ENCODE measurements at regions of chr5 and their contacts with region 1.

Region 1: DNA sequence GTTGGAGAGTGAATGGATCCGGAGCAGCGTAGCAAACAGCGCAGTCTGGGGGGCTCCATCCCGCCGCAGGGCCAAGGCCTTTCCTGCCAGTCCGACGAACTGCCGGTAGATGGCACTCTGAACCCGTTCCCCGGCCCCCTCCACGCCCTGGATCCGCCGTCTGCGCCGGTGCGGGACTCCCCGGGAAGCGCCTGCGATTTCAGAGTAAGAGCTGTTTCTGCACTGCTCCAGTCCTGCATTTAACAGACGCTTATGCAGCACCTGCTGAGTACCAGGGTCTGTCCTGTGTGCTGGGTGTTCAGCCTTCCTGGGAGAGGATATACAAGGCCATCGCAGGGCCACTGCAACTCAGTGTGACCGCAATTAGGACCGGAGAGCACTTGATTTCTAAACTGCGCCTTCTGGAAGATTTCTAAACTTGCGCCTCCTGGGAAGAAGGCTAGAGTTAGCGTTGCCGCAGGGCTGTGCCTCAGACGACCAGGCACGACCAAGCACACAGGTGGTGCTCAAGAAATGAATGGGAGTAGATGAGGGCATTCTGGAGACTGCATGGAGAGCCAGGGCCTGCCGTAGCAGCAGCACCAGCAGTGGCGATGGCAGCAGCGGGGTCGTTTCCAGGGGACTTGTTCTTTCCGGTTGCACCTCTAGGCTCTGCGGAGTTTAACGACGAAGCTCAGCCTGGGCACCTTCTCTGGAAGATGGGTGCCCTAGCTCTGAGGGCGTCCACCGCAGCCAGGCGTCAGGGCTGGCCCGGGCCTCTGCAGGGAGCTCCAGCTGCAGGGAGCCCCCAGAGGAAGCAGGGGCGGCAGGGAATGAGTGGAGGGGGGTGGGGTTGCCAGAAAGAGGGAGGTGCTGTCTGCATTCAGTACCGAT is 14.3 kb upstream of the TIFAB start:
- DNase-seq: peak; percentile 78
- H3K4me3 Mint-ChIP-seq: no peak overlapping the region
- H3K27ac Mint-ChIP-seq: no peak overlapping the region
- H3K4me1 Mint-ChIP-seq: peaks cover 9% of the 10 kb centered on the region
- H3K27me3 Mint-ChIP-seq: peaks cover 68% of the 10 kb centered on the region

Region 2: GRCh38 chr5:135308752-135309151 is 157.7 kb before region 1 on chr5:
- CTCF ChIA-PET with region 1: no interaction called
- DNase-seq: no peak
- H3K4me3 Mint-ChIP-seq: no peak overlapping the region
- H3K27ac Mint-ChIP-seq: peak overlapping the region; percentile 92
- H3K4me1 Mint-ChIP-seq: peaks cover 89% of the 10 kb centered on the region
- H3K27me3 Mint-ChIP-seq: peaks cover 20% of the 10 kb centered on the region

Region 3: DNA sequence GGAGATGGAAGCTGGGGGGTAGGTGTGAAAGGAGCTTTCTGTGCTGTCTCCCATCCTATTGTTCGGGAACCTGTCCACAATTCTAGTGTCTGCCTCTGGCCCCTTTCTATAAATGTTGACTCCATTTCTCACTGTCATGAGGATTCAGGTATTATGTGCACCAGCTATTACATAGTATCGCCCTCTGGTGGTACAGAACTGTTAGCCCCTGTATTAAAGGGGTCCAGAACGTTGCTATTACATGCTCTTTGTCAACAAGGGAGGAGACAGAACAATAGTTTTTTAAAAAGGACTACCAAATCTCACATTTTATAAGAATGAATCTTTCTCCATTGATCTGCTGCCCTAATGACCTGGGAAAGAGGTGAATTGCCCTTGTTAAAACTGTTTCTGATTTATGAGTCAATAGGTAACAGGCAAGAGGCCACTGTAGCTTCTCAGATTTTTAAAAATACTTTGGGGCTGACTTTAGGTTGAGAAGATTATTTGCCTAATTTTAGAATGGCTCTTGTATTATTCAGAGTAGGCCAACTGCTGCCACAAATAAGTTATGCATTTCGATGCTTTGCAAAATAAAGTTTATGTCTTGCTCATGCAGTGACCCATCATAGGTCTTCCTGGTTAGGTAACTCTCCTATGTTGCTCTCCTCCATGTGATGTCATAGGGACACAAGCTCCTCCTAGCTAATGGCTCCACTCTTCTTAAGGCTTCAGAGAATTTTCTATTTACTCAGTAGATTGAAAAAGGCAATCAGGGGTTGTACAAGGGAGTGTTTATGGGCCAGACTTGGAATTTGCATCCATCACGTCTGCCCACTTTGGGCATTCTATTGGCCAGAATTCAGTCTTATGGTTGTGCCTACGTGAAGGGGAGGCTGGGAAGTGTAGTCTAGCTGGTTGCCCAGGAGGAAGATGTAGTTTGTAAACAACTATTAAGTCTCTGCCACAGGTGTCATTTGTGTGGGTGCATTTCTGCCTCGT is 40.0 kb before region 1 on chr5:
- CTCF ChIA-PET with region 1: interaction called, 12 read pairs
- DNase-seq: peak; percentile 57
- H3K4me3 Mint-ChIP-seq: no peak overlapping the region
- H3K27ac Mint-ChIP-seq: peak overlapping the region; percentile 90
- H3K4me1 Mint-ChIP-seq: peaks cover 20% of the 10 kb centered on the region
- H3K27me3 Mint-ChIP-seq: peaks cover 25% of the 10 kb centered on the region

Region 4: GRCh38 chr5:135445306-135445985 is 21.0 kb before region 1 on chr5:
- CTCF ChIA-PET with region 1: interaction called, 12 read pairs
- DNase-seq: no peak
- H3K4me3 Mint-ChIP-seq: no peak overlapping the region
- H3K27ac Mint-ChIP-seq: no peak overlapping the region
- H3K4me1 Mint-ChIP-seq: no peaks in the 10 kb centered on the region
- H3K27me3 Mint-ChIP-seq: peaks cover 40% of the 10 kb centered on the region

Region 5: DNA sequence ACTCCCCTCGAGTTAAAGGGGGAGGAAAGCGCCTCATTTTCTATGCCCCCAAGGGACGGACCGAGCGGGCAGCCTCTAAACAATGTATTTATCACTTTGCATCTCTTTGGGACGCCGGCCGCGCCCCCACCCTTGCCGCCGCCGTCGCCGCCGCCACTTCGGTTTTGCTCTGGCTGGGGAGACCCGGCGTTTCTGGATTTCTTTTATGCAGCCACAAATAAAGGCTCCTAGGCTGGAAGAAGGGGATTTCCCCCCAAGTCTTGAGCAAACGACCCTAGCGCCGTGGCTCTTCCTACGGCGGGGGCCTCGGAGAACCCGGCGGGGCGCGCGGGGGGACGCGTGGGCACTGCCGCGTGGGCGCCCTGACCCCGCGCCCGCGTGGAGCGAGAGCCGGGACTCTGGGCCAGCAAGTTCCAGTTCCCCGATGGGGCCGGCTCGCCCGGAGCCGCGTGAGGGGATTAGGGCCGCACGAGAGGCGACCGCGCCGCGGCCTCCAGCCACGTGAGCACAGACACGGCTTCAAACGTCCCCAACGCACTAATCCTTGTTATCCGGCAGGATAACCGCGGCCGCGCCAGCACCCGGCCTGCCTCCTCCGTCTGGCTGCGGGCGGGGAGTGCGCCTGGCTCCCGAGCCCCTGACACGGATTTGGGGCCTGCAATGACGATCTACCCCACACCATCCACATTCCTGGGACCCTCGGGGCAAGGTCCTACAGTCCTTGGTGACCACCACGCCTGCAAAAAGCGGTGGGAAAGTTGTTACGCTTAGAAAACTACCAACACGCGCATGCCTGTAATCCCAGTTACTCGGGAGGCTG is 77.3 kb after region 1 on chr5:
- CTCF ChIA-PET with region 1: interaction called, 415 read pairs
- DNase-seq: peak; percentile 31
- H3K4me3 Mint-ChIP-seq: peak overlapping the region; percentile 79
- H3K27ac Mint-ChIP-seq: no peak overlapping the region
- H3K4me1 Mint-ChIP-seq: peaks cover 13% of the 10 kb centered on the region
- H3K27me3 Mint-ChIP-seq: peaks cover 100% of the 10 kb centered on the region

Region 6: GRCh38 chr5:135551593-135552447 is 85.4 kb after region 1 on chr5:
- CTCF ChIA-PET with region 1: interaction called, 415 read pairs
- DNase-seq: peak; percentile 78
- H3K4me3 Mint-ChIP-seq: no peak overlapping the region
- H3K27ac Mint-ChIP-seq: no peak overlapping the region
- H3K4me1 Mint-ChIP-seq: no peaks in the 10 kb centered on the region
- H3K27me3 Mint-ChIP-seq: peaks cover 80% of the 10 kb centered on the region

Region 7: DNA sequence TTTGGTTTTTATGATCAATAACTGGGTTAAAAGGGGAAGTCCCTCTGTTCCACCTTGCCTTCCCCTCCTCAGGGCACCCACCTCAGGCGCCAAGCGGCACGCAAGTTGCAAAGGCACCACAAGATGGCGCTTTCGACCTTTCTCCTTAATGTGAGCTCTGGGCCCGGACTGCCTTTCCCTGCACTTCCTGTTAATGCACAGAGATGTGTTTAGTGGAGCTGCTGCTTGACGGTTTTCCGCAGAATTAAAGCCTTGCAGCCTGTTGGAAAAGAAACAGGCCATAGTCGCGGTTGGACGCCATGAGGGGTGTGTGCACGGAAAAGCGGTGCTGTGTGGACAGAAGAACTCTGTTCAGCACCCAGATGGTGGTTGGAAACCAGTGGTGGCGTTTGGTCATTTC is 94.4 kb after region 1 on chr5:
- CTCF ChIA-PET with region 1: interaction called, 415 read pairs
- DNase-seq: peak; percentile 78
- H3K4me3 Mint-ChIP-seq: no peak overlapping the region
- H3K27ac Mint-ChIP-seq: no peak overlapping the region
- H3K4me1 Mint-ChIP-seq: peaks cover 4% of the 10 kb centered on the region
- H3K27me3 Mint-ChIP-seq: peaks cover 41% of the 10 kb centered on the region

Region 8: GRCh38 chr5:135565725-135566421 is 99.5 kb after region 1 on chr5:
- CTCF ChIA-PET with region 1: interaction called, 151 read pairs
- DNase-seq: peak; percentile 81
- H3K4me3 Mint-ChIP-seq: no peak overlapping the region
- H3K27ac Mint-ChIP-seq: no peak overlapping the region
- H3K4me1 Mint-ChIP-seq: peaks cover 8% of the 10 kb centered on the region
- H3K27me3 Mint-ChIP-seq: peaks cover 42% of the 10 kb centered on the region

Region 9: GRCh38 chr5:135660826-135661575 is 194.6 kb after region 1 on chr5:
- CTCF ChIA-PET with region 1: no interaction called
- DNase-seq: no peak
- H3K4me3 Mint-ChIP-seq: no peak overlapping the region
- H3K27ac Mint-ChIP-seq: no peak overlapping the region
- H3K4me1 Mint-ChIP-seq: no peaks in the 10 kb centered on the region
- H3K27me3 Mint-ChIP-seq: peaks cover 13% of the 10 kb centered on the region

Measured in activated naive CD4-positive, alpha-beta T cell treated with anti-CD3 and anti-CD28 coated beads, Interleukin-2, amount 10 ng/mL, durations not matched to agents 7 days and 5 days (primary cell).